ENCODE measurements at regions of chr9 and their contacts with region 1.

Region 1: GRCh38 chr9:90914868-90915483 is 113.4 kb downstream of the SYK start:
- DNase-seq: peak; percentile 80
- ATAC-seq: peak; percentile 99
- H3K4me3 Mint-ChIP-seq: no peak overlapping the region
- H3K27ac Mint-ChIP-seq: no peak overlapping the region
- H3K4me1 Mint-ChIP-seq: no peaks in the 10 kb centered on the region
- H3K27me3 Mint-ChIP-seq: no peaks in the 10 kb centered on the region
- CTCF ChIP-seq: peak; percentile 90

Region 2: DNA sequence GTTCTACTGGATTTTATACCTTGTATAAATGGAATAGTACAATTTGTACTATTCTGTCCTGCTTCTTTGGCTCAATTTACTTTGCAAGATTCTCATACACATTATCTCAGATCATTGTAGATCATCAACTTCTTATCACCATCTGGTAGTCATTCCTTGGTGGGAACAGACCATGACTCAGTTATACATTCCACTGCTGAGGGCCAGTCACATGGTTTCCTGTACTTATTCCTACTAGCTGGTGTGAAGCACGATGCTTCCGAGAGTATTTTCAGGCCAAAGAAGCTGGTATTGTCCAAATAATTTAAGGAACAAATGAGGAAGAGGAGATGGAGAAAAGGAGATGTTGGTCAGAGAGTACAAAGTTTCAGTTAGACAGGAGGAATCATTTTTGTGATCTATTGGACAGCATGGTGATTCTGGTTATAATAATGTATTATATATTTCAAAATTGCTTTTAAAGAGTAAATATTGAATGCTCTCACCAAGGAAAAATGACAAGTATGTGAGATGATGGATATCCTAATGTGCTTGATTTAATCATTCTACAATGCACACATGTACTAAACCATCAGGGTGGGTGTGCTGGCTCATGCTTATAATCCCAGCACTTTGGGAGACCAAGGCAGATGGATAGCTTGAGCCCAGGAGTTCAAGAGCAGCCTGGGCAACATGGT is 10.7 kb after region 1 on chr9:
- CTCF ChIA-PET with region 1: interaction called, 12 read pairs
- POLR2A ChIA-PET with region 1: no interaction called
- intact Hi-C with region 1: no loop called
- DNase-seq: no peak
- ATAC-seq: no peak
- H3K4me3 Mint-ChIP-seq: no peak overlapping the region
- H3K27ac Mint-ChIP-seq: no peak overlapping the region
- H3K4me1 Mint-ChIP-seq: no peaks in the 10 kb centered on the region
- H3K27me3 Mint-ChIP-seq: peaks cover 16% of the 10 kb centered on the region
- CTCF ChIP-seq: no peak

Region 3: DNA sequence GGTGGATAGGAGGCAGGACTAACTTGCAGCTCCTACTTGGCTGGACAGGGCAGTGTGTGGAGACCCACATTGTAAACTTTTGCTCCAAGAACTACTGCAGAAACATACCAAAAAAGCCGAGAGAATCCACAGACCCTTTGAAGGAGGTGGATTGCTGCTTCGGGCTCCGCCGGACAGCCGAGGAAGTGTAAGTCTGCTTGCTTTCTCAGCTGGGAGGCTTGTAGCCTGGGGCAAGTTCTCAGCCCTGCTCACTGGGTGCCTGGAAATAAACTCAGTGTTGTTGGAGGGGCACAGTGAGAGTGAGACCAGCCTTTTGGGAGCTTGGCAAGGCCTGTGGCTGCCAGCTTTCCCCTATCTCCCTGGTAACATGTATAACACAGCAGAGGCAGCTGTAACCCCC is 102.2 kb after region 1 on chr9:
- CTCF ChIA-PET with region 1: interaction called, 11 read pairs
- POLR2A ChIA-PET with region 1: no interaction called
- intact Hi-C with region 1: no loop called
- DNase-seq: no peak
- ATAC-seq: no peak
- H3K4me3 Mint-ChIP-seq: no peak overlapping the region
- H3K27ac Mint-ChIP-seq: no peak overlapping the region
- H3K4me1 Mint-ChIP-seq: peaks cover 11% of the 10 kb centered on the region
- H3K27me3 Mint-ChIP-seq: peaks cover 33% of the 10 kb centered on the region
- CTCF ChIP-seq: no peak

Region 4: DNA sequence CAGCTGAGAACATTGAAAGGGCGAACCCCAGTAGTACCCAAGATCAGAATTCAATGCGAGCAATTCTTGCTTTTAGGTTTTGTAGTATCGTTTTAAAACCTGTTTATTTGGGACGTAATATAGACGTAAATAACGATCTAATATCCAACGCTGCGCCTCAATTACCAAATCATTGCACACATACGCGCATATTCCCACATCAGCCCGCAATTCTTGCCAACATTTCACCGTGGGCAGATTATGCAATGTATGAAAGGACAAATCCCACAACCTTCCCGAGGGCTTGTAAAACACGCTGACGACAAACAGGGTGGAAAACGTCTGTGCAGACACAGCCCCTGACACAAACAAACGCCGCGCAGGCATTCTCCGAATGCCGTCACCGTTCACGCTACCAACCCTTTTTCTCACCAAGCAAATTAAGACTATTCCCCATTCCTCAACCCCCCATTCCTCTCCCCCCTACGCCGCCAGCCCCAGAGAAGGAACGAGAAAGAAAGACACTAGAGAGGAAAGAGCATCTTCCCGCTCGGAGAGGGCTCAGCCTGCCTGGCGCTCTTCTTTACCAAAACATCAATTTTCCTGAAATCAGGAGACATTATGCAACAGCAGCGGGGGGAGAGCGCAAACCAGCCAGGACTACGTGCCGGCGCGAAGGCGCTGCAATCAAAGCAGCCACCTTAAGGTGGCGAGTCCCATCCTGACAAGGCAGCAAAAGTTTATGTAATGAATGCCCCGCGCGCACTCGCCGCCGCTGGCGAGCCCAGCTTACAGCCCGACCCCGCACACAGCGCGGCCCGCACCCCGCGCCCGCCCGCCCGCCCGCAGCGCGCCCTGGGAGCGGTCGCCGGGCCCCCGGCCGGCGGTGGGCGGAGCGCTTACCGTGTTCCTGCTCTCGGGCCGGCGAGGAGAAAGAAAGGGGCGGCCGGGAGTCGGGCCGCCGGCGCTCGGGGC is 508.1 kb after region 1 on chr9:
- CTCF ChIA-PET with region 1: interaction called, 60 read pairs
- POLR2A ChIA-PET with region 1: no interaction called
- intact Hi-C with region 1: loop called (anchors 2 kb)
- DNase-seq: peak; percentile 74
- ATAC-seq: peak; percentile 34
- H3K4me3 Mint-ChIP-seq: peak overlapping the region; percentile 99
- H3K27ac Mint-ChIP-seq: peak overlapping the region; percentile 88
- H3K4me1 Mint-ChIP-seq: peaks cover 58% of the 10 kb centered on the region
- H3K27me3 Mint-ChIP-seq: peaks cover 4% of the 10 kb centered on the region
- CTCF ChIP-seq: peak; percentile 30

Region 5: DNA sequence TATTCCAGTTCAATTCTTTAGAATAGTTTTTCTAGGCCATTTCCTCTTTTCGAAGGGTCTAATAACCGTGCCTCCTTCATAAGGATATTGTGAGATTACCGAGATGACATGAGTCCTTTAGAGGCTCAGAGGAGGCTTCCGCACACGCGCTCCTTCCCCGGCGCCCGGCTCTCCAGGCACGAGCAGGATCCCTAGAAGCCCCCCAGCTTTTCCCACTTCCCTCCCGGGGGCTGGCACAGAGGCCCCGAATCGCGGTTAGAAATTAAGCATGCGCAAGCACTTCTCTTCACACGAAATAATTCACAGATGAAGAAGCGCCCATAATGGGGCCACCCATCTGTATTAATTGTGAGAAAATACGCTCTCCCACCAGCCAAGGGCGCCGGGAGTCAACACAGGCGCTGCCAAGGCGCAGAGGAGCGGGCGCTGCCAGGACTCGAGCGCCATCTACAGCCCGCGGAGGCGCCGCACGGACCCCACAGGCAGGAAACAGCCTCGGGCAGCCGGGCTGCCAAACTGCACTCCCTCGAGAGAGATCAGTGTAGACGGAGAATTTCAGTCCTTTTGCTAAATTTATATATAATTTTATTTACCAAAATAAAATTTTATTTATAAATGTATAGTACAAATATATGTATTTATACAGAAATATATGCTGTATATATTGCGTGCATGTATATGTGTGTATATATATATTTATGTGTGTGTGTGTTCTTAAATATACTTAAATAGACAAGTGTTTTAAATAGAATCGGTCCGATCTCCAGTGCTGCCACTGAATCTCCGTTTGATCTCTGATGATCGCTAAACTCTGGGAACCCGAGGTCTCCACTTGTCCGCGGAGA is 766.7 kb after region 1 on chr9:
- CTCF ChIA-PET with region 1: interaction called, 4 read pairs
- POLR2A ChIA-PET with region 1: no interaction called
- intact Hi-C with region 1: loop called (anchors 10 kb)
- DNase-seq: peak; percentile 84
- ATAC-seq: peak; percentile 97
- H3K4me3 Mint-ChIP-seq: peak overlapping the region; percentile 35
- H3K27ac Mint-ChIP-seq: no peak overlapping the region
- H3K4me1 Mint-ChIP-seq: peaks cover 5% of the 10 kb centered on the region
- H3K27me3 Mint-ChIP-seq: peaks cover 16% of the 10 kb centered on the region
- CTCF ChIP-seq: peak; percentile 98

Measured in activated CD8-positive, alpha-beta T cell treated with anti-CD3 and anti-CD28 coated beads for 36 hours (primary cell).